ENCODE measurements at regions of chr5 and their contacts with region 1.

Region 1: GRCh38 chr5:139968547-139969261 is 74.4 kb downstream of the NRG2 start:
- DNase-seq: peak; percentile 76 to 98 (median 90)

Region 2: GRCh38 chr5:139869042-139869790 is 99.5 kb before region 1 on chr5:
- intact Hi-C with region 1: loop called (anchors 5 kb)
- DNase-seq: peak in 3 of 10 donors; percentile 75 to 83 (median 81)

Measured in posterior cingulate gyrus (tissue), 11 donors.